Right ventricle myocardium superior (tissue), 1 donor: ENCODE measurements at regions of chr2 and their contacts with region 1.

Region 1: GRCh38 chr2:152635635-152636298 is 81.5 kb downstream of the PRPF40A start:
- DNase-seq: peak; percentile 53
- ATAC-seq: peak; percentile 77

Region 2: GRCh38 chr2:151409601-151410484 is 1225.9 kb before region 1 on chr2 and contains the start of gene RIF1:
- intact Hi-C with region 1: no loop called
- DNase-seq: peak; percentile 92
- ATAC-seq: peak; percentile 100
- total RNA-seq, gene RIF1: 14.6 TPM

Region 3: DNA sequence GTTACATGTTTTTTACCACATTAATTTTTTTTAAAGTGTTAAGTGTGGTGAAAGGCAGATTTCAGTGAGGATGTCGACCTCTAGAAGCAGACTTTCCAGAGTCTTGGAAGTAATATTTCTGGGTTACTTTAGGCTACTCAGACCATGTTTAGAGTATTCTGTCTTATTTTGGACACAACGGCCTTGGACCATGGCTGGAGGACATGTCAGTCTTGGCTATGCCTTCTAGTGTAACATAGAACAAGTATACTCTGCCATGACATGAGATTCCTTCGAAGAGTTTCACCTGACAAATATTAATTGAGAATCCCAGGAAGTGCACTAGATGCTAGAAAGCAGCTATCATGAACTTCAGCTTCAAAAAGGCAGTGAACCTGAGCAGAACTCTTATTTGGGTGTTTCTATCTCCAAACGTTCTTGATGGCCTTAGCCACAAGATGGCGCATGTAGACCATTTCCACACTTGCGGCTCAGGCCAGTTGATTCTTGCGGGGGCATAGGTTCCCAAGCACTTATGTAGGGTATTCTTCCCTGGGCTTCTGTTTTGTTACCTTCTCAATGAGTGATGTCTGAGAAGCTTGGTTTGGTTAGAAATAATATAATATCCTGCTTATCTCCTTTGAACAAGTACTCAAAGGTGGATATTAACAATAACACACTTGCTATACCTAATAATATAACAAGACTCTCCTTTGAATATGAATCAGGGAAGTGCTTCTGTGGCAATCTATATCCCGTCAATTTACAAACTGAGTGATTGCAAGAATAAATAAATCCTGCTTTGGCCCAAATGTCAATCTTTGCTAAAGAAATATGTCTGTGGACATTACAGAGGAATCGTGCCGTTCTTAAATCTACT is 598.9 kb before region 1 on chr2:
- intact Hi-C with region 1: loop called (anchors 10 kb)
- DNase-seq: peak; percentile 49
- ATAC-seq: peak; percentile 89

Region 4: DNA sequence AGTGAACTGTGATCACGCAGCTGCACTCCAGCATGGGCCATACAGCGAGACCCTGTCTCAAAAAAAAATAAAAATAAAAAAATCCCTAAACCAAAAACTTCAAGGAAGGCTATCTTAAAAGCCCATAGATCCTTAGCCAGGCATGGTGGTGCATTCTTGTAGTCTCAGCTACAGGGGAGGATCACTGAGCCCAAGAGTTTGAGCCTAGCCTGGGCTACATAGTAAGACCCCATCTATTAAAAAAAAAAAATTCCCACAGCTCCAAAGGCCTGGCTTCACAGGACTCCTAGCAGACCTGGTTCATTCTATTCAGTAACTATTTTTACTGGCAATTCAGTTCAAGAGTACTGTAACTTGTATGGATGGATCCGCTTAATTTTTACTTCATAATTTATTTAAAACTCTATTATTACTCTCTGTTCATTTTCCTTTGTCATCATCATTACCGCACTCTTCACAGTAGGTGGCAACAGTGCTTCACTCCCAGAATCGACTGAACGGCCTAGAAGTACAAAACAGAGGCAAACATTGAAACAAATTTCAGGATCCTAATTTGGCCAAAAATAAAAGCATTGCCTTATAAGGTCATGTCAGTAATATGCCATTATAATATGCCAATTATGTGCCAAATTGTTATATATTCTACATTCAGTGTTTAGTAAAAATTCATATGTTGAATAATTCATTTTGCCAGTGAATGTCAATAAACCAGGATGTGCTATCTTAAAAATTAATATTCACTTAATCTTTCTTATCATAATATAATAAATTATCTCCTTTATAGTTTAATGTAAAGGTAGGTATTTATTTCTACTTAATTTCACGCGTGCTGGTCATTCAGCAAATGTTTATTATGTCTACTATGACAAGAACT is 445.9 kb before region 1 on chr2:
- intact Hi-C with region 1: loop called (anchors 5 kb)
- DNase-seq: no peak
- ATAC-seq: peak; percentile 92

Region 5: DNA sequence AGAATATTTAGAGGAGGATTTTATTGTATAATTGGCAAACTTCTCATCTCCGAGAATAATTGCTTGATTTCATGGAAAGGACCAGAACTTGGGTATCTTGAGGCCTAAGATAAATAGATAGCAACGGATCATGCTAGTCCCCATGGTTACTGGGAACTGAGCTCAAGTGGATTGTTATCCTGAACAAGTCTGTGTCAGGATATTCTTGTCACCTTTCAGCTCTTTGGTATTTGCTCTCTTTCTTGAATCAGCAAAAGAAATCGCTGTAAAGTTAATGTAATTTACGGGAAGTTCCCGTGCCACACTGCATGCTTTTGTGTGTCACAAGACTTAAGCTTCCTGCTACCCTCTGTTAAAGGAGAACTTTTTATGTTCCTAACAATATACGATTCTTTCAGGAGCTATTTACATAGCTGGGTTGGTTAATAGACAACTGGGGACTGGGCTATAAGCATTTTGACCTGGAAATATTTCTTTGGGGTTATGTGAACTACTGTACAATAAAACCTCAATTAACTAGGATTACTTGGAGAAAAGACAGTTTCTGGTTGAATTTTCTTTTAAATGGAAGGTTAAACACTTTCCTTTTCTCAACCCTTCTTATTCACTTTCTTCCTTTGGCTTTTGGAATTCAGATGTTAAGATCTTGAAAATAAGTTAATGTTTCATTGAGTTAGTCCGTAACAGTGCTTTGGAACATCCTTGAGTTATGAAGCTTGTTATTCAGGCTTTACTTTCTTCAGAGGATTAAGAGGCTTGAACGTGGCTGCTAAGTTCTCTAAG is 149.6 kb before region 1 on chr2:
- intact Hi-C with region 1: no loop called
- DNase-seq: no peak
- ATAC-seq: peak; percentile 48

Region 6: DNA sequence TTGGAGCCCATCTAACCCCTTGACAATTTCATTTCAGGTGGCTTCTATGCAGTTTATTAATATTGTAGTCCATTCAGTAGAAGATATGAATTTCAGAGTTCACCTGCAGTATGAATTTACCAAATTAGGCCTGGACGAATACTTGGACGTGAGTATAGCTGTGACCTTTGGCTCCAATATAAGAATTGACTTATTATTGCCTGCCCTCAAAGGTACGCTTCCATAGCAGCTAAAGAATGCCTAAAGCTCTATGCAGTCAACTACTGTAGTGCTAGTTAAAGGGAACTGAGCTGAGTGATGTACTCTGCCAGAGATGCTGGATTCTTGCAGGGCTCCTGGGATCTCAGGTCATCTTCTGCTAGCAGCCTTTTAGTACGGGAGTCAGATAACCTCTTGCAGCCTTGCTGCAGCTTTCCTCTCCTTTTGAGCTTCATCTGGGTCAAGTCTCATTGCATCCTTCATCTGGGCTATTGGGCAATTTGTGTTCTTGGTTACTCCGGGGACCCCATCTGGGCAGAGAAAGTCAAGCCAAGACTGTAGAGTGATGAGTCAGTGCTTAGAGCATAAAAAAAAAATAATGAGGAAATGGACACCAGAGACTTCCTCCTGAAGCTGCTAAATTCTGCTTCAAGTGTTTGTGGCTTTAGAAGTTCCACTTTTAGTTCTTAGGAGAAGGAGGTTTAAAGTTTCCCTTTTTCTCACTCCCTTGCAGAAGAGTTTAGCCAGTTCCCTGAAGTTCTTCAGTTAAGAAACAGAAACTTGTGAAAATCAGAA is 24.1 kb before region 1 on chr2:
- intact Hi-C with region 1: no loop called
- DNase-seq: peak; percentile 51
- ATAC-seq: peak; percentile 94